OCI-LY7 (cell line): ENCODE measurements at regions of chr17 and their contacts with region 1.

Region 1: DNA sequence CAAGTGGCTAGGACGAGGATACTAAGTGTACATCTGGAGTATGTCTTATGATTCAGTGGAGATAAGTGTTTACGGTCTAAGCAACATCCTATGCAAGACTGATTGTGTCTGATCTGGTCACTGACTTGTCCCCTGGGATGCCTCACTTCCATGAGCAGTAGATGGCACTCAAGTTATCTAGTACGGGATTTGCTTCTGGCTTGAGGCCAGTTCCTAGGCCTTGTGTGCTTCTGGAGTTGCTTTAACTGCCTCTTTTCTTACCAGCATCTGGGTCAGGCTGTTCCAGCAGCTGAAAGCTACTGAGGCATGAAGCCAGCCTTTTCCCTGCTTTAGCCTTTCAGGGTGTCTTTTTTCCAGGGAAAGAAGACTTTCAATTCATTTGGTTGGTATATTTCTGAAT is 23.0 kb downstream of the SUPT6H start:
- DNase-seq: no peak
- H3K4me3 ChIP-seq: no peak overlapping the region
- H3K27ac ChIP-seq: no peak overlapping the region
- H3K4me1 ChIP-seq: no peaks in the 10 kb centered on the region
- CTCF ChIP-seq: no peak

Region 2: GRCh38 chr17:28500712-28501379 is 184.1 kb before region 1 on chr17:
- CTCF ChIA-PET with region 1: no interaction called
- POLR2A ChIA-PET with region 1: no interaction called
- intact Hi-C with region 1: no loop called
- DNase-seq: no peak
- H3K4me3 ChIP-seq: no peak overlapping the region
- H3K27ac ChIP-seq: no peak overlapping the region
- H3K4me1 ChIP-seq: no peaks in the 10 kb centered on the region
- CTCF ChIP-seq: no peak

Region 3: GRCh38 chr17:28623696-28624095 is 61.3 kb before region 1 on chr17:
- CTCF ChIA-PET with region 1: no interaction called
- POLR2A ChIA-PET with region 1: no interaction called
- intact Hi-C with region 1: loop called (anchors 10 kb)
- DNase-seq: no peak
- H3K4me3 ChIP-seq: no peak overlapping the region
- H3K27ac ChIP-seq: peak overlapping the region; percentile 42
- H3K4me1 ChIP-seq: peaks cover 13% of the 10 kb centered on the region
- CTCF ChIP-seq: no peak

Region 4: GRCh38 chr17:28667870-28668269 is 17.1 kb before region 1 on chr17:
- CTCF ChIA-PET with region 1: no interaction called
- POLR2A ChIA-PET with region 1: no interaction called
- intact Hi-C with region 1: no loop called
- DNase-seq: no peak
- H3K4me3 ChIP-seq: no peak overlapping the region
- H3K27ac ChIP-seq: no peak overlapping the region
- H3K4me1 ChIP-seq: peaks cover 11% of the 10 kb centered on the region
- CTCF ChIP-seq: no peak